Activated T-helper 2 cell treated with anti-CD3 and anti-CD28 coated beads, Interferon-gamma antibody, Interleukin-2, Interleukin-4, amounts not matched to agents 10 μg/mL and 5 μg/mL and 100 μg/mL, durations not matched to agents 14 hours and 24 hours and 36 hours (primary cell): ENCODE measurements at regions of chr4 and their contacts with region 1.

Region 1: GRCh38 chr4:47531241-47531953 is 46.3 kb downstream of the ATP10D start:
- DNase-seq: peak; percentile 60
- H3K4me3 Mint-ChIP-seq: no peak overlapping the region
- H3K27ac Mint-ChIP-seq: peak overlapping the region; percentile 54
- H3K4me1 Mint-ChIP-seq: peaks cover 57% of the 10 kb centered on the region
- H3K27me3 Mint-ChIP-seq: no peaks in the 10 kb centered on the region

Region 2: GRCh38 chr4:47485047-47485692 is 46.2 kb before region 1 on chr4 and contains the start of gene ATP10D:
- intact Hi-C with region 1: loop called (anchors 1 kb)
- DNase-seq: peak; percentile 66
- H3K4me3 Mint-ChIP-seq: peak within 1 kb of the TSS; percentile 90
- H3K27ac Mint-ChIP-seq: peak within 1 kb of the TSS; percentile 43
- H3K4me1 Mint-ChIP-seq: peaks cover 20% of the 10 kb centered on the region
- H3K27me3 Mint-ChIP-seq: peaks cover 9% of the 10 kb centered on the region
- total RNA-seq, gene ATP10D: 1.6 and 2.5 TPM in 2 replicates

Region 3: DNA sequence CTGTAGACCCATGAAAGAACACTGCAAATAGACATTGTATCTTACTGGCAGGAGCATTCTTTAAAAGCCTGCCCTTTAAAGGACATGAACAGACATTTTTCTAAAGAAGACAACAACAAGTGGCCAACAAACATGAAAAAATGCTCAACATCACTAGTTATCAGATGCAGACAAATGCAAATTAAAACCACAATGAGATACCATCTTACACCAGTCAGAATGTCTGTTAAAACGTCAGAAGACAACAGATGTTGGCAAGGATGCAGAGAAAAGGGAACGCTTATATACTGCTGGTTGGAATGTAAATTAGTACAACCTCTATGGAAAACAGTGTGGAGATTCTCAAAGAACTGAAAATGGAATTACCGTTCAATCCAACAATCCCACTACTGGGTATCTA is 30.9 kb after region 1 on chr4:
- intact Hi-C with region 1: loop called (anchors 1 kb)
- DNase-seq: no peak
- H3K4me3 Mint-ChIP-seq: no peak overlapping the region
- H3K27ac Mint-ChIP-seq: no peak overlapping the region
- H3K4me1 Mint-ChIP-seq: peaks cover 20% of the 10 kb centered on the region
- H3K27me3 Mint-ChIP-seq: peaks cover 2% of the 10 kb centered on the region

Region 4: GRCh38 chr4:47914220-47914925 is 383.0 kb after region 1 on chr4 and contains the start of gene NFXL1:
- intact Hi-C with region 1: loop called (anchors 5 kb)
- DNase-seq: peak; percentile 93
- H3K4me3 Mint-ChIP-seq: peak within 1 kb of the TSS; percentile 90
- H3K27ac Mint-ChIP-seq: peak within 1 kb of the TSS; percentile 83
- H3K4me1 Mint-ChIP-seq: peaks cover 22% of the 10 kb centered on the region
- H3K27me3 Mint-ChIP-seq: no peaks in the 10 kb centered on the region
- total RNA-seq, gene NFXL1: 11.9 and 13.3 TPM in 2 replicates